CD8-positive, alpha-beta T cell (primary cell): ENCODE measurements at regions of chr4 and their contacts with region 1.

Region 1: DNA sequence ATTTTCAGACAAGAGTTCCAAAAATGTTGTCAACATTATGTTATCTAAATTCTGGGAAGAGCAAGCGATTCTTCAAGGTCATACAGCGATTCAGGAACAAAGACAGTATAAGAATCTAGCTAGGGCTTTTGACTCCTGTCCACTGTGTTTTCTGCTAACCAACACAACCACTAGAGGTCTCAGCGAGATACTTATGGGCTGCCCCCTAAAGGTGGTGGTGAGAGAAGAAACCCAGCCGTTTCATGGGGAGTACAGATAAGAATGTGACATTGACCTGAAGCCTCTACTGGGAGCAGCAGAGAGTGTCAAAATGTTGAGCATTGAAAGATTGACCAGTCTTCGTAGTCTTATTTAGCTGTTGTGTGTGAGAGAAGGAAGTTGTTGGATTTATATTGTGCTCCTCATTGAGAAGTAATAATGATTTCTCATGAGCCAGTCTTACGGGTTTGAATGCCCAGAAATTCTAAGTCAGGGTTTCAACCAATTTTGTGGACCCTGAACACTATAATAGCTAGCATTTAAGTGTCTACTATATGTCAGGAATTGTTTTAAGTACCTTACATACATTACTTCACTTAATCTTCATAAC is 168.3 kb downstream of the SPRY1 start:
- DNase-seq: peak; percentile 15 to 81 (median 52)
- ATAC-seq: peak; percentile 98
- H3K4me3 ChIP-seq: no peak overlapping the region
- H3K4me3 Mint-ChIP-seq: no peak overlapping the region
- H3K27ac ChIP-seq: no peak overlapping the region
- H3K27ac Mint-ChIP-seq: no peak overlapping the region
- H3K4me1 ChIP-seq: no peaks in the 10 kb centered on the region
- H3K4me1 Mint-ChIP-seq: peaks cover 3% of the 10 kb centered on the region
- H3K27me3 ChIP-seq: no peaks in the 10 kb centered on the region
- H3K27me3 Mint-ChIP-seq: peaks cover 2% of the 10 kb centered on the region
- CTCF ChIP-seq: peak; percentile 95

Region 2: GRCh38 chr4:123390846-123391456 is 173.9 kb before region 1 on chr4:
- CTCF ChIA-PET with region 1: interaction called, 8 read pairs
- POLR2A ChIA-PET with region 1: no interaction called
- intact Hi-C with region 1: loop called (anchors 1 to 5 kb)
- DNase-seq: peak in 2 of 9 experiments; percentile 41 to 52
- ATAC-seq: peak; percentile 40
- H3K4me3 ChIP-seq: no peak overlapping the region
- H3K4me3 Mint-ChIP-seq: no peak overlapping the region
- H3K27ac ChIP-seq: no peak overlapping the region
- H3K27ac Mint-ChIP-seq: no peak overlapping the region
- H3K4me1 ChIP-seq: no peaks in the 10 kb centered on the region
- H3K4me1 Mint-ChIP-seq: no peaks in the 10 kb centered on the region
- H3K27me3 ChIP-seq: no peaks in the 10 kb centered on the region
- H3K27me3 Mint-ChIP-seq: no peaks in the 10 kb centered on the region
- CTCF ChIP-seq: peak; percentile 76

Region 3: GRCh38 chr4:123616951-123617461 is 52.2 kb after region 1 on chr4:
- CTCF ChIA-PET with region 1: interaction called, 10 read pairs
- POLR2A ChIA-PET with region 1: no interaction called
- intact Hi-C with region 1: loop called (anchors 2 to 5 kb)
- DNase-seq: peak; percentile 1 to 91 (median 49)
- ATAC-seq: peak; percentile 93
- H3K4me3 ChIP-seq: no peak overlapping the region
- H3K4me3 Mint-ChIP-seq: peak overlapping the region; percentile 23
- H3K27ac ChIP-seq: peak overlapping the region; percentile 31 to 59
- H3K27ac Mint-ChIP-seq: peak overlapping the region; percentile 87
- H3K4me1 ChIP-seq: peaks cover 16% of the 10 kb centered on the region
- H3K4me1 Mint-ChIP-seq: peaks cover 24% of the 10 kb centered on the region
- H3K27me3 ChIP-seq: no peaks in the 10 kb centered on the region
- H3K27me3 Mint-ChIP-seq: no peaks in the 10 kb centered on the region
- CTCF ChIP-seq: no peak

Region 4: DNA sequence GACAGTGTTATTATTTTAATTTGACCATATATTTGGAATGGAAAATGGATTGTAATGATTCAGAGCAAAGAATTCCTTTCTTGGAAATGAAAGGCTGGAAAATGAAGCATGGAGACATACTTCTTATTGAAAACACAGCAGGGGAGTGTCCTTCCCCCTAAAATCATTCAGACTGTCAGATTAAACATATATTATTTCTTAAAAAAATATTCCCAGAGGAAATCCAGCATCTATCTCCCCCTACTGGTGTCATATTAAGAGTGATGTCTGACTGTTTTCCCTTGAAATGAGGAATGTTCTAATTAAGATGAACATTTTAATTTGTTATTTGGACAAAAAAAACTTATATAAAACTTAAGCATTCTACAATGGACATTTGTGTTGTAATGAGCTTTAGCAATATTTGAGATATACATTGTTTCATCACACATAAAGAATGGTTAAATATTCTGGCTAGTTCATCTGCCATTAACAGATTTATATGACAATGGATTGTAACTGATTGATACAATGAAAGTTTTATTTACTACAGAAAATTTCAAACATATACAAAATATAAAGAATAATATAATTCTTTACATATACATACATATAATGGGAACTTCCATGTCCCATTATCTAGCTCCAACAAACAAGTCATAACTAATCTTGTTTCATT is 96.4 kb after region 1 on chr4:
- CTCF ChIA-PET with region 1: interaction called, 45 read pairs
- POLR2A ChIA-PET with region 1: no interaction called
- intact Hi-C with region 1: loop called (anchors 1 kb)
- DNase-seq: peak in 2 of 9 experiments; percentile 20 to 40
- ATAC-seq: no peak
- H3K4me3 ChIP-seq: no peak overlapping the region
- H3K4me3 Mint-ChIP-seq: no peak overlapping the region
- H3K27ac ChIP-seq: no peak overlapping the region
- H3K27ac Mint-ChIP-seq: no peak overlapping the region
- H3K4me1 ChIP-seq: no peaks in the 10 kb centered on the region
- H3K4me1 Mint-ChIP-seq: no peaks in the 10 kb centered on the region
- H3K27me3 ChIP-seq: no peaks in the 10 kb centered on the region
- H3K27me3 Mint-ChIP-seq: no peaks in the 10 kb centered on the region
- CTCF ChIP-seq: peak; percentile 57